Right ventricle myocardium superior (tissue), 1 donor: ENCODE measurements at regions of chr5 and their contacts with region 1.

Region 1: DNA sequence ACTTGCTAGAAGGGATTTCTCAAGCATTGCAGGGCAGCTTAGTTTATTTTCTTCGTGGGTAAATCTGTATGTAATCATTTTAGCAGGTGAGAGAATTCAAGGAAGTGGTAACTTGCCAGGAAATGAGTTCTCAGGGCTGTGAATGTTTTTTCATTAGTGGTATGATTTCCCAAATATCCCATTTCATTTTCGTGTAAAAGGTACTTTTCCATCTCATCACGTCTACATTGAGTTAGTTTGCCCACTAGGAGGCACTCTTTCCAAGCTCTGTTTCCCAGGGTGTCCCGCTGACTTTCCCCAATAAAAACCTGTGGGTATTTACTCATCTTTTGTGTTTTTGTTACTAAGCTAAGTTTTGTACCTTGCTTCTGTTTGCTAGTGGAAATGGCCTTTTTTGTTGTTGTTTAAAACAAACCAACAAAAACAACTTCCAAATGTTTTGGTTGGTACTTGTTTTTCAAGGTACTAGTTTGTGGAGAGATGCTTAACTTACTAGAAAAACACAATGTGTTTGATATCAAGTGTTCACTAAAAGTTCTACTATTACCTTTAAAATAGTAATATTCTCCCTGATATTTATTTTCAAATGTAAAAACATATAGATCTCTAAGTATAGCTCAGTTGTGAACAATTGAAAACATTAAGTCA is 373.6 kb downstream of the ADGRV1 start:
- DNase-seq: no peak
- ATAC-seq: peak; percentile 85

Region 2: DNA sequence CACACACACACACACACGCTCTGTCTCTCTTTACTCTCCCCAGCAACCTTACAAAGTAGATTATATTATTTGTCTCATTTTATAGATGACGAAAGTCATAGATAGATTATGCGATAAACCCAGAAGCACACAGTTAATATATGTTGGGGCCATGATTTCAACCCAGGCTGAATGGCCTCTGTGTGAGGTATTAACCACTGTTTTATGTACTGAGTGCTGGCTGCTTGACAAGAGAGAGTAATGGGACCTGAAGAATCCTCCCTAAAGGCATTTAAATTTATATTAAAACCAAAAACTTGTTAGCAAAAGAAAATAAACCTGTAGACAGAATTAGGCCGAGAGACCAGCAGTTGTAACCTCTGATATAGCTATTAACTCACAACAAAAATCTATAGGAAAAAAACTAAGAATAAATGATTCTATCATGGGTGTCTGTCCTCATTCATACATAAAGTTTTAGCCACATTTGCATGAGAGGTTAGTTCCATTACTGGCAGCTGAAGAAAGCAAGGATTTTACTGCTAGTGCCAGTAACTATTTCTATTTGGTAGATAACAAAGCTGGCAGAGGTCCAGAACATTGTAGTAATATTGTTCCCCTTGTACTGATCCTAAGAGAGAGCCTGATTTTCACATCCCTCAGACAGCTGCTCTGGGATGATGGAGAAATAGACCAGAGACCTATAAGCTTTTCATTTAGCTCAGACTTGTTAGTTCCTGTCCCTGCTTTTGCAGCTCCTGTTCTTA is 122.7 kb before region 1 on chr5:
- intact Hi-C with region 1: no loop called
- DNase-seq: no peak
- ATAC-seq: no peak

Region 3: GRCh38 chr5:91059409-91059808 is 127.2 kb after region 1 on chr5:
- intact Hi-C with region 1: no loop called
- DNase-seq: no peak
- ATAC-seq: no peak

Region 4: GRCh38 chr5:91101600-91102379 is 169.6 kb after region 1 on chr5:
- intact Hi-C with region 1: loop called (anchors 10 kb)
- DNase-seq: peak; percentile 72
- ATAC-seq: peak; percentile 94

Region 5: GRCh38 chr5:91219803-91220371 is 287.7 kb after region 1 on chr5:
- intact Hi-C with region 1: loop called (anchors 10 kb)
- DNase-seq: peak; percentile 39
- ATAC-seq: no peak

Region 6: DNA sequence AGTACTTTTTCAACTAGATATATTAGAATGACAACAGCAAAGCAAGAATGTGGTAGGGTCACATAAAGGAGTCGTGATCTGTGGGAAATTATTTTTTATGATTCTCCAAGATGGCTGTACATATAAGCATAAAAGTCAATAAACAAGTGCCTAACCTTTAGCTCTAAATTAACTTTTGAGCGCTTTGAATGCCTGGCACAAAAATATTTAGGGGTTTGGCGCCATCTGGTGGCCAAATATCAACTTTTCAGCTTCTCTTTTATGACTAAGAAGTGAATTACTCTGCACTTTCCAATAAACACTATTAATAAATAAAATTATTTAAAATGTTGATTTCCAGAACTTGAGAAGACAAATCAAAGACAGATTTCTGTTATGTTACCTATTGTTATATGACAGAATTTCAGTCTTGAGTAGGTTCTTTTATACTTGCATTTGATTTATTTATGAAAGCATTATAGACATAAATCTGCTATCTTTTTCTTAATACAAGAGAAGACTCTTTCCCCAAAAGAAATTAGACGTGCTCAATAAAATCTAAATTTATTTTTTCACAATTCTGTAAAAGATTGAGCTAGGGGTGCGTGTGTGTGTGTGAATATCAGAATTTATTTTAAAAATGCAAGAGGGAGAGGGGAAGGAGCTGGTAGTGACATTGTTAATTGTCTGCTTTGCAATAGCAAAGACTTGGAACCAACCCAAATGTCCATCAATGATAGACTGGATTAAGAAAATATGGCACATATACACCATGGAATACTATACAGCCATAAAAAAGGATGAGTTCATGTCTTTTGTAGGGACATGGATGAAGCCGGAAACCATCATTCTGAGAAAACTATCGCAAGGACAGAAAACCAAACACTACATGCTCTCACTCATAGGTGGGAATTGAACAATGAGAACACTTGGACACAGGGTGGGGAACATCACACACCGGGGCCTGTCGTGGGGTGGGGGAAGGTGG is 487.7 kb after region 1 on chr5:
- intact Hi-C with region 1: loop called (anchors 5 kb)
- DNase-seq: peak; percentile 44
- ATAC-seq: peak; percentile 56